Activated CD8-positive, alpha-beta memory T cell treated with anti-CD3 and anti-CD28 coated beads, Interleukin-2, amount 10 ng/mL, durations not matched to agents 7 days and 5 days (primary cell): ENCODE measurements at regions of chr6 and their contacts with region 1.

Region 1: GRCh38 chr6:26045065-26045927 is 41.9 kb upstream of the HFE start:
- DNase-seq: peak; percentile 90
- ATAC-seq: peak; percentile 59
- H3K4me3 Mint-ChIP-seq: peak overlapping the region; percentile 78
- H3K27ac Mint-ChIP-seq: peak overlapping the region; percentile 99
- H3K4me1 Mint-ChIP-seq: peaks cover 36% of the 10 kb centered on the region
- H3K27me3 Mint-ChIP-seq: no peaks in the 10 kb centered on the region

Region 2: DNA sequence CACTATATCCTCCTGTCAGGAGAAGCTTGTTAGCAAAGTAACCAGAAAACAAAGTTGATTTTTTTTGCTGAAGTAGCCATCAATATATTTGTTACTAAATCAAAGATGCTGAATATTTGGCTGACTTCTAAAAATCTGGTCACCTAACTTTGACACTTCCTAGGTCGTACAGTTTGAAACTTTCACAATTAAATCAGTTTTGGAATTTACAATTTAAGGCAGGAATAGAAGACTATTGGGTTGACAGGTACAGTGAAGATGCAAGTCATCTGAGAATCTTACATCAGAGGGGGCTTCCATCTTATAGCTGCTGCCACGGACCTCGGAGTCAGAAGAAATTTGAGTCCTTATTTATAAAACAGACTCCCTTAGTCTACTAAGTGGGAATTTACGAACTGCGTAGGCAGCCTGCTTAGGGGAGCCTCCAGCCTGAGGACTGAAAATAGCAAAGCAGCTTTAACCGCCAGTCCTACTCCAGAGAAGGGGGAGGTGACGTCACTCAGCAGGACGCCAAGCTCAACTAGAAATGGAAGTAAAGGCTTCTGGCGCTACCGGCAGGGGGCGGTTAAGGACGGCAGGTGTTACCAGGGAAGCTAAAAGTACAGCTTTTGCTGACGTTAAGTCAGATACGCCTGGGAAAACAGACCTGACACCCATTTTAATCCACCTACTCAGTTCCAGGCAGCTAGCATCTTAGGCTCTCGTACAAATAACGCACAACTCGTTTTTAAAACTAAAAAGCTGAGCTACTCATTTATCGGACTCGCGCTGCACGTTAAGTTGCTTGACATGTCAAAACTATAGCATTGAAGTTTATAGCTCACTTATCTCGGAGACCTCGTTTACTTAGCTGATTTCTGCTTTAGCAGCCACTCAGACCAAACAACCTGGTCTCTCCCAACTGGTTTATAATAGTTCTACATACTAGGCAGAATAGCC is 19.1 kb before region 1 on chr6:
- CTCF ChIA-PET with region 1: interaction called, 47 read pairs
- DNase-seq: peak; percentile 97
- ATAC-seq: peak; percentile 37
- H3K4me3 Mint-ChIP-seq: peak overlapping the region; percentile 83
- H3K27ac Mint-ChIP-seq: peak overlapping the region; percentile 99
- H3K4me1 Mint-ChIP-seq: peaks cover 81% of the 10 kb centered on the region
- H3K27me3 Mint-ChIP-seq: peaks cover 4% of the 10 kb centered on the region

Region 3: GRCh38 chr6:26031595-26032339 is 13.5 kb before region 1 on chr6:
- CTCF ChIA-PET with region 1: interaction called, 47 read pairs
- DNase-seq: peak; percentile 97
- ATAC-seq: peak; percentile 63
- H3K4me3 Mint-ChIP-seq: peak overlapping the region; percentile 78
- H3K27ac Mint-ChIP-seq: peak overlapping the region; percentile 99
- H3K4me1 Mint-ChIP-seq: peaks cover 73% of the 10 kb centered on the region
- H3K27me3 Mint-ChIP-seq: peaks cover 12% of the 10 kb centered on the region